ENCODE measurements at regions of chr3 and their contacts with region 1.

Region 1: DNA sequence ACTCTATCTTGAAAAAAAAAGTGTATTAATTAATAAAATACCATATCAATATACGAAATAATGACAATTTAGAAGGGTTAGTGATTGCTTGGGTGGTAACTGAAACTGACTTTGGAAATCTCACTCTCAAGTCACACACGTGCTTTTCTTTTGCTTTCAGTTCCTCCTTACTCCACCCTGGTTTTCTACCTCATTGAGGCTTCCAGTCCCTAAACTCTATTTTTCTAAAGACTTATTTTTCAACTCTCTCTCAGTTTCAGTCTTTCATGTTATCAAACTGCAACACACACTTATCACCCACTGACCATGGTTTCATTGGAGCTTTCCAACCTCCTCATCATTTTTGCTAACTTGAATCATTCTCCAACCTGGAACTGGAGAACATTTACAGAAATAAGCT is 23.5 kb downstream of the IL12A start:
- DNase-seq: no peak
- H3K4me3 ChIP-seq: no peak overlapping the region
- H3K27ac ChIP-seq: no peak overlapping the region
- H3K4me1 ChIP-seq: no peaks in the 10 kb centered on the region
- H3K27me3 ChIP-seq: no peaks in the 10 kb centered on the region
- CTCF ChIP-seq: no peak
- EP300 ChIP-seq: no peak
- RAD21 ChIP-seq: no peak

Region 2: GRCh38 chr3:159813822-159814523 is 198.1 kb before region 1 on chr3:
- CTCF ChIA-PET with region 1: interaction called, 122 read pairs
- POLR2A ChIA-PET with region 1: no interaction called
- DNase-seq: no peak
- H3K4me3 ChIP-seq: no peak overlapping the region
- H3K27ac ChIP-seq: no peak overlapping the region
- H3K4me1 ChIP-seq: peaks cover 0 to 15% of the 10 kb centered on the region in 2 experiments; a peak in 1 of 4 replicates
- H3K27me3 ChIP-seq: no peaks in the 10 kb centered on the region
- CTCF ChIP-seq: no peak
- EP300 ChIP-seq: no peak
- RAD21 ChIP-seq: no peak

Region 3: GRCh38 chr3:160150525-160150924 is 138.4 kb after region 1 on chr3:
- CTCF ChIA-PET with region 1: no interaction called
- POLR2A ChIA-PET with region 1: no interaction called
- DNase-seq: no peak
- H3K4me3 ChIP-seq: no peak overlapping the region
- H3K27ac ChIP-seq: peak overlapping the region in 1 of 2 experiments; percentile 48; a peak in 2 of 4 replicates
- H3K4me1 ChIP-seq: peaks cover 0 to 12% of the 10 kb centered on the region in 2 experiments; a peak in 1 of 4 replicates
- H3K27me3 ChIP-seq: no peaks in the 10 kb centered on the region
- CTCF ChIP-seq: no peak
- EP300 ChIP-seq: no peak
- RAD21 ChIP-seq: no peak

Measured in SK-N-SH (cell line).